Psoas muscle (tissue), 8 donors: ENCODE measurements at regions of chr20 and their contacts with region 1.

Region 1: GRCh38 chr20:9220874-9221547 is 152.1 kb downstream of the PLCB4 start:
- DNase-seq: no peak
- ATAC-seq: no peak
- H3K4me3 ChIP-seq: no peak overlapping the region
- H3K27ac ChIP-seq: no peak overlapping the region
- H3K4me1 ChIP-seq: peaks cover 30% of the 10 kb centered on the region
- H3K27me3 ChIP-seq: no peaks in the 10 kb centered on the region
- CTCF ChIP-seq: no peak

Region 2: GRCh38 chr20:9332783-9333479 is 111.9 kb after region 1 on chr20:
- intact Hi-C with region 1: loop called in 1 of 2 experiments (anchors 10 kb)
- DNase-seq: no peak
- ATAC-seq: no peak
- H3K4me3 ChIP-seq: no peak overlapping the region
- H3K27ac ChIP-seq: no peak overlapping the region
- H3K4me1 ChIP-seq: no peaks in the 10 kb centered on the region
- H3K27me3 ChIP-seq: no peaks in the 10 kb centered on the region
- CTCF ChIP-seq: no peak

Region 3: GRCh38 chr20:11057624-11058023 is 1836.6 kb after region 1 on chr20:
- intact Hi-C with region 1: no loop called
- DNase-seq: no peak
- ATAC-seq: peak in 1 of 4 donors; percentile 30
- H3K4me3 ChIP-seq: no peak overlapping the region
- H3K27ac ChIP-seq: no peak overlapping the region
- H3K4me1 ChIP-seq: no peaks in the 10 kb centered on the region
- H3K27me3 ChIP-seq: no peaks in the 10 kb centered on the region
- CTCF ChIP-seq: no peak